Head of caudate nucleus (tissue), 42 donors: ENCODE measurements at regions of chr2 and their contacts with region 1.

Region 1: DNA sequence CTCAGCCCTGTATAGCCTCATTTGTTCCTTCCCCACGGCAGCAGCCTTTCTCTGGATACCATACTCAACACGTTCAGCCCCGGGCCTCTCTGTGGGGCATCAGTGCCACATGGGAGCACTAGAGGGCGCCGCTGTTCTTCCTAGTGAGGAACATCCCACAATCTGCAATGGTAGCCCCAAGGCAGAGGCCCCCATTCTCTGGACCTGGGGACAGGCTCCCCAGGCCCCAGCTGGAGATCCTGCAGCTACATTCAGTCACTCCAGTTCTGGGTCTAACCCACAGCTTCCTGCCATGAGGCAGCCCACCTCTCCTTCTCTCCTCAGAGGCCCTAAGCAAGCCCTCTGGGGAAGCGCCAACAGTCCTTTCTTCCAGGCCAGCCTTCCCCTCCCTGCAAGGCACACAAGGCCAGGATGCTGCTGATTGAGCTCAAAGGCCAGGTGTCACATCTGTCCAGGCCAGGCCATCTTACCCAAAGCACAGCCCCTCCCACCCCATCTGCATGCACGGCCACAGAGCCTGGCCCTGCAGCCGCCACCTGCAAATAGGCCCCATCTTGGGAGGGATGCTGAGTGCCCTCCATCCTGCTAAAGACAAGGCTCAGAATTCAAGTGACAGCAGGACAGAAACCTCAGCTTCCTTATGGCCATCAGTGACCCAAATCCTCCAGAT is 14.3 kb upstream of the SFXN5 start:
- DNase-seq: peak; percentile 82 to 96 (median 90)

Region 2: GRCh38 chr2:73163483-73164367 is 77.9 kb after region 1 on chr2:
- intact Hi-C with region 1: loop called (anchors 5 kb)
- DNase-seq: peak in 41 of 42 donors; percentile 59 to 89 (median 76)

Region 3: DNA sequence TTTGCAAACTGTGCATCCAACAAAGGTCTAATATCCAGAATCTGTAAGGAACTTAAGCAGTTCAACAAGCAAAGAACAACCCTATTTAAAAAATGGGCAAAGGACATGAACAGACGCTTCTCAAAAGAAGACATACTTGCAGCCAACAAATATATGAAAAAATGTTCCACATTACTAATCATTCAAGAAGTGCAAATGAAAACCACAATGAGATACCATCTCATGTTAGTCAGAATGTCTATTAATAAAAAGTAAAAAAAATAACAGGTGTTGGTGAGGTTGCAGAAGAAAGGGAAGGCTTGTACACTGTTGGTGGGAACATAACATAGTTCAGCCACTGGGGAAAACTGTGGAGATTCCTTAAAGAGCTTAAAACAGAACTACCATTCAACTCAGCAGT is 430.2 kb after region 1 on chr2:
- intact Hi-C with region 1: no loop called
- DNase-seq: no peak